Posterior vena cava (tissue), 2 donors: ENCODE measurements at regions of chr13 and their contacts with region 1.

Region 1: GRCh38 chr13:47908197-47908902 is 92.7 kb downstream of the SUCLA2 start:
- DNase-seq: no peak

Region 2: DNA sequence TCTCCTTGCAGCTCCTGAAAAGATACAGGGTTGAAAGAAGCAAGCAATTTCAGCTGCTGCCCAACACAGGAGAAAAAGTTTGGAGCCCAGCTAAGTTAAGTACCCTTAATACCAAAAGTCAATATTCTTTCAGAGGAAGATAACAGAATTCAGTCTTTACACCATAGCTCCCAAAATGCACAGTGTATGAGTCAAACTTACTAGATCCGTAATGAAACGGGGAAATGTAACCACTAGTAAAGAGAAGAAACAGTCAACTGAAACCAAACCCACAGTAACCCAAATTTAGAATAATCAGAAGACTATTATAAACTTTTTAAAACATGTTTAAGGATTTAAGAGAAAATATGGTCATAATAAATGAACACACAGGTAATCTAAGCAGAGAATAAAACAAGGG is 47.5 kb after region 1 on chr13:
- intact Hi-C with region 1: loop called in 1 of 2 experiments (anchors 1 kb)
- DNase-seq: no peak